ENCODE measurements at regions of chr9 and their contacts with region 1.

Region 1: GRCh38 chr9:23123048-23123632 is 676.5 kb downstream of the DMRTA1 start:
- DNase-seq: peak in 4 of 5 donors; percentile 30 to 65 (median 44)
- H3K4me3 ChIP-seq: no peak overlapping the region
- H3K27ac ChIP-seq: no peak overlapping the region
- H3K4me1 ChIP-seq: no peaks in the 10 kb centered on the region
- H3K27me3 ChIP-seq: no peaks in the 10 kb centered on the region
- CTCF ChIP-seq: peak; percentile 63

Region 2: DNA sequence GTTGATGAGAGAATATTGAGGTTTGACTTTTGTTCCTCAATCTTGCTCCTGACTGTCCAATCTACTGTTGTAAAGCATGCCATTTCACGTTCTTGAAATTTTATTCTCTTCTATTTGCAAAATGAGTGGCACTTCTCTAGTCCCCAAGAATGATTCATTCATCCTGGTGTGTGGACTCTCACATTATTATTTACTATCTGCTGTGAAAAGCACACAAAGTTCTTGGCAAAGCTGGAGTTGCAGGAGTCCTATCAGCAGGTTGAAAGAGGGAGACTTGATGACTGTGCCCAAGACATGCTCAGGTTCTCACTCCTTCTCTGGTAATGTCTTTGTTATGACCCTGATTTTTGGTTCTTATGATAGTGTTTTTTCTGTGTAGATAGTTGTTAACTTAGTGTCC is 293.9 kb before region 1 on chr9:
- intact Hi-C with region 1: no loop called
- DNase-seq: no peak
- H3K4me3 ChIP-seq: no peak overlapping the region
- H3K27ac ChIP-seq: no peak overlapping the region
- H3K4me1 ChIP-seq: no peaks in the 10 kb centered on the region
- H3K27me3 ChIP-seq: no peaks in the 10 kb centered on the region
- CTCF ChIP-seq: no peak

Region 3: GRCh38 chr9:23492126-23493002 is 369.2 kb after region 1 on chr9:
- intact Hi-C with region 1: loop called (anchors 10 kb)
- DNase-seq: peak in 3 of 5 donors; percentile 9 to 72 (median 52)
- H3K4me3 ChIP-seq: no peak overlapping the region
- H3K27ac ChIP-seq: no peak overlapping the region
- H3K4me1 ChIP-seq: peaks cover 0 to 3% (median 0%) of the 10 kb centered on the region in 3 donors
- H3K27me3 ChIP-seq: no peaks in the 10 kb centered on the region
- CTCF ChIP-seq: peak; percentile 64

Measured in kidney (tissue), 22 donors.